H1 (cell line): ENCODE measurements at regions of chr22 and their contacts with region 1.

Region 1: DNA sequence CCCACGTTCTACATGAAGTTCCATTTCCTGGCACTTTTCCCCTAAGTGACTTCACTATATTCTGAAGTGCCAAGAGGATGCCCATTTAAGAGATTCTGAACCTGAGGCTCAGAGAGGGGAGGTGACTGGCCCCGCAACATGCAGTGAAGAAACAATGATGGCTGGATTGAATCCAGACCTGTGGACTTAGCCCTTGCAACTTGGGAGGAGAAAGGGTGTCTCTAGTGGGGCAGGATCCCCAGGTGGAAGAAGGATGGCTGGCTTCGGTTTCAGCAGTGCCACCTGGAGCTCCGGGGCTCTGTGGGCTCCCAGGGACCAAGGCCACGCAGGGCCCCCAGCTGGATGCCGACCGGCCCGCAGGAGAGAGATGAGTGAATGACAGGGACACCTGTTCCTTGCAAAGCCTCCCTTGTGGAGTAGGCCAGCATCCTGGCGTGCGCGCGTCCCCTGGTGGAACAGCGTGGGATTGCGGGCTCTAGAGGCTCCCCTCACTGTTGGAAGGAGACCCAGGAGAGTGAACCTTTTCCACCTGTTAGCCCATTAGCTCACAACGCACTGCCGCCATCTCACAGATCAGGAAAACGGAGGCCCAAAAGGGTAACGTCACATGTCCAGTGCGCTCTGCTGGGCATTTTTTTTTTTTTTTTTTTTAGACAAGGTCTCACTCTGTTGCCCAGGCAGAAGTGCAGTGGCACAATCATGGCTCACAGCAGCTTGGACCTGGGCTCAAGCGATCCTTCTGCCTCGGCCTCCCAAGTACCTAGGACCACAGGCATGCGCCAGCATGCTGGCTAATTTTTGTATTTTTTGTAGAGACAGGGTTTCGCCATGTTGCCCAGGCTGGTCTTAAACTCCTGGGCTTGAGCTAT is 104.7 kb downstream of the KIAA1671 start:
- DNase-seq: peak; percentile 64 to 99
- H3K4me3 ChIP-seq: no peak overlapping the region
- H3K27ac ChIP-seq: no peak overlapping the region
- H3K4me1 ChIP-seq: peaks cover 0 to 7% (median 2%) of the 10 kb centered on the region in 4 experiments; a peak in 3 of 7 replicates
- H3K27me3 ChIP-seq: no peaks in the 10 kb centered on the region
- CTCF ChIP-seq: peak; percentile 93 to 99 (median 96)
- EP300 ChIP-seq: no peak
- POLR2A ChIP-seq: no peak
- RAD21 ChIP-seq: peak; percentile 90 to 92

Region 2: DNA sequence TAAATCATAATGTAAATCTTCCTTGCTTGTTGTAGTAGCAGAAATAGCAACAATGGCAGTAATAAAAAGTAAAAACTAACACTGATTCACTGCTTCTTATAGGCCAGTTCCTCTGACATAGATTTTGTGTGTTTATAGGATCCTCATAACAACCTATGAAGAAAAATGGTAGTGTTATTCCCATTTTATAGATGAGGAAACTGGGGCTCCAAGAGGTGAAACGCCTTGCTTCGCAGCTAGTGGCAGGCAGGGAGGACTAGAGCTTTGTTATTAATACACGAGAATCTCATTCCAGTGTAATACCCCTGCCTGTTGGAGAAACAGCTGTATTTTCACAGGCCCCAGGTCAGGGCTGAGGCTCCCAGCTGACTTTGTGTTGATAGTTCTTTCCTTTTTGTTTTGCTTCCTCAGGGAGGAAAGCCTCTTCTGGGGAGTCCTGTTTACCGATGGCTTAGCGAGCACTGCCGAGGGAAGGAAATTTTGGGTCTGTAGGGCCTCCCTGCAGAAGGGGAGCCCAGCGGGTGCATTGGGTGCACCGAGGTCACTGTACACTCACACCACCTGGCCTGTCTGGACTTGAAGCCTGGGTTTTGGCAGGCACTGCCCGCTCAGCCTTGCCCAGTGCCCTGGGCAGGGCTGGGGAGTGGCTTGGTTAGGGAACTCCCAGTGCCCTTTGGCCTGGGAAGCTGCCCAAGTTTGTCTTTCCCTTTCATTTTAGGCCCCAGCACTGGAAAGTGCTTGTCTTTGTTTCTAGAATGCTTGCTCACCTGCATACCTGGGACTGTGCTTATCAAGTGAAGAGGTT is 91.2 kb before region 1 on chr22:
- CTCF ChIA-PET with region 1: interaction called, 15 read pairs
- POLR2A ChIA-PET with region 1: interaction called, 3 read pairs
- DNase-seq: no peak
- H3K4me3 ChIP-seq: no peak overlapping the region
- H3K27ac ChIP-seq: no peak overlapping the region
- H3K4me1 ChIP-seq: peaks cover 8 to 14% (median 13%) of the 10 kb centered on the region in 4 experiments; a peak in 6 of 7 replicates
- H3K27me3 ChIP-seq: no peaks in the 10 kb centered on the region
- CTCF ChIP-seq: no peak
- EP300 ChIP-seq: no peak
- POLR2A ChIP-seq: no peak
- RAD21 ChIP-seq: no peak

Region 3: DNA sequence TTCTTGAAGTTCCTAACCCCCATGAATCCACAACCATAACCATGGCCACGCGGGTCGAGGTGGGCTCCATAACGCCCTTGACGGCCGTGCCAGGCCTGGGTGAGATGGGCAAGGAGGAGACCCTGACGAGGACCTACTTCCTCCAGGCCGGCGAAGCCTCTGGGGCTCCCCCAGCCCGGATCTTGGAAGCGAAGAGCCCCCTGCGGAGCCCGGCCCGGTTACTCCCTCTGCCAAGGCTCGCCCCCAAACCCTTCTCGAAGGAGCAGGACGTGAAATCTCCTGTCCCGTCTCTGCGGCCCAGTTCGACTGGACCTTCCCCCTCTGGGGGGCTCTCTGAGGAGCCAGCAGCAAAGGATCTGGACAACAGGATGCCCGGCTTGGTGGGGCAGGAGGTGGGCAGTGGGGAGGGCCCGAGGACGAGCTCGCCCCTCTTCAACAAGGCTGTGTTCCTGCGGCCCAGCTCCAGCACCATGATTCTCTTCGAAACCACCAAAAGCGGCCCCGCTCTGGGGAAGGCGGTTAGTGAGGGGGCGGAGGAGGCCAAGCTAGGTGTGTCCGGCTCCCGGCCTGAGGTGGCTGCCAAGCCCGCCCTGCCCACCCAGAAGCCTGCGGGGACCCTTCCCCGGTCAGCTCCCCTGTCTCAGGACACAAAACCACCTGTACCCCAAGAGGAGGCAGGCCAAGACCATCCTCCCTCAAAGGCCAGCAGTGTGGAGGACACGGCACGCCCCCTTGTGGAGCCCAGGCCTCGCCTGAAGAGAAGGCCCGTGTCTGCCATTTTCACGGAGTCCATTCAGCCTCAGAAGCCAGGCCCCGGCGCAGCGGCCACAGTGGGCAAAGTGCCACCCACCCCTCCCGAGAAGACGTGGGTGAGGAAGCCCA is 29.0 kb before region 1 on chr22:
- CTCF ChIA-PET with region 1: interaction called, 10 read pairs
- POLR2A ChIA-PET with region 1: interaction called, 3 read pairs
- DNase-seq: peak in 1 of 2 experiments; percentile 88
- H3K4me3 ChIP-seq: no peak overlapping the region
- H3K27ac ChIP-seq: no peak overlapping the region
- H3K4me1 ChIP-seq: no peaks in the 10 kb centered on the region; a peak in 1 of 7 replicates
- H3K27me3 ChIP-seq: no peaks in the 10 kb centered on the region
- CTCF ChIP-seq: peak; percentile 85 to 91 (median 85)
- EP300 ChIP-seq: no peak
- POLR2A ChIP-seq: no peak
- RAD21 ChIP-seq: peak; percentile 85 to 91

Region 4: GRCh38 chr22:25067851-25068421 is 10.7 kb after region 1 on chr22:
- CTCF ChIA-PET with region 1: interaction called, 18 read pairs
- POLR2A ChIA-PET with region 1: no interaction called
- DNase-seq: no peak
- H3K4me3 ChIP-seq: no peak overlapping the region
- H3K27ac ChIP-seq: no peak overlapping the region
- H3K4me1 ChIP-seq: no peaks in the 10 kb centered on the region; a peak in 2 of 7 replicates
- H3K27me3 ChIP-seq: no peaks in the 10 kb centered on the region
- CTCF ChIP-seq: no peak
- EP300 ChIP-seq: no peak
- POLR2A ChIP-seq: no peak
- RAD21 ChIP-seq: no peak

Region 5: GRCh38 chr22:25094579-25094978 is 37.3 kb after region 1 on chr22:
- CTCF ChIA-PET with region 1: no interaction called
- POLR2A ChIA-PET with region 1: no interaction called
- DNase-seq: no peak
- H3K4me3 ChIP-seq: no peak overlapping the region
- H3K27ac ChIP-seq: no peak overlapping the region
- H3K4me1 ChIP-seq: peaks cover 0 to 8% (median 4%) of the 10 kb centered on the region in 4 experiments; a peak in 5 of 7 replicates
- H3K27me3 ChIP-seq: no peaks in the 10 kb centered on the region
- CTCF ChIP-seq: no peak
- EP300 ChIP-seq: no peak
- POLR2A ChIP-seq: no peak
- RAD21 ChIP-seq: no peak

Region 6: GRCh38 chr22:25134028-25134427 is 76.8 kb after region 1 on chr22:
- CTCF ChIA-PET with region 1: no interaction called
- POLR2A ChIA-PET with region 1: no interaction called
- DNase-seq: no peak
- H3K4me3 ChIP-seq: no peak overlapping the region
- H3K27ac ChIP-seq: no peak overlapping the region
- H3K4me1 ChIP-seq: peaks cover 0 to 14% (median 5%) of the 10 kb centered on the region in 4 experiments; a peak in 6 of 7 replicates
- H3K27me3 ChIP-seq: no peaks in the 10 kb centered on the region
- CTCF ChIP-seq: no peak
- EP300 ChIP-seq: no peak
- POLR2A ChIP-seq: no peak
- RAD21 ChIP-seq: no peak